ENCODE measurements at regions of chrX and their contacts with region 1.

Region 1: DNA sequence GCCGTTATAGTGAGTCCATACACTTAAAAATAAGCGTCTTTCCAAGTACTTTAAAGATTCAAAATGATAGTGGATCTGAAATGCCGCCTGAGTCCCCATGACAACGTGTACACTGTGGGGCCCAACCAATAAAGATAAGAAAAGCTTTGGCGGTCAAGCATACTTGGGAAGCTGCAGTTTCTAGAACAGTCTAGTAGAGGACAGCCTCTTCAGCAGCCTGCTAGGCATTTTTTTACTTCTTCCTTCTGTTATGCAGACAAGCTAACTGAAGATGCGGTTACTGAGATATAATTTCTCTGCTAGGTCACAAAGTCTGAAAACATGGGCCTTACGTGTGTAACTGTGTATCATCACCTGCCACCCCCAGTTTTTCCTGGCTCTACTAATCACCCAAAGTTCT is 402 bp upstream of the UPRT start:
- DNase-seq: no peak
- H3K4me3 ChIP-seq: peak overlapping the region; percentile 64 to 78
- H3K27ac ChIP-seq: peak overlapping the region; percentile 86 to 97
- H3K4me1 ChIP-seq: no peaks in the 10 kb centered on the region
- H3K27me3 ChIP-seq: no peaks in the 10 kb centered on the region
- CTCF ChIP-seq: no peak

Region 2: DNA sequence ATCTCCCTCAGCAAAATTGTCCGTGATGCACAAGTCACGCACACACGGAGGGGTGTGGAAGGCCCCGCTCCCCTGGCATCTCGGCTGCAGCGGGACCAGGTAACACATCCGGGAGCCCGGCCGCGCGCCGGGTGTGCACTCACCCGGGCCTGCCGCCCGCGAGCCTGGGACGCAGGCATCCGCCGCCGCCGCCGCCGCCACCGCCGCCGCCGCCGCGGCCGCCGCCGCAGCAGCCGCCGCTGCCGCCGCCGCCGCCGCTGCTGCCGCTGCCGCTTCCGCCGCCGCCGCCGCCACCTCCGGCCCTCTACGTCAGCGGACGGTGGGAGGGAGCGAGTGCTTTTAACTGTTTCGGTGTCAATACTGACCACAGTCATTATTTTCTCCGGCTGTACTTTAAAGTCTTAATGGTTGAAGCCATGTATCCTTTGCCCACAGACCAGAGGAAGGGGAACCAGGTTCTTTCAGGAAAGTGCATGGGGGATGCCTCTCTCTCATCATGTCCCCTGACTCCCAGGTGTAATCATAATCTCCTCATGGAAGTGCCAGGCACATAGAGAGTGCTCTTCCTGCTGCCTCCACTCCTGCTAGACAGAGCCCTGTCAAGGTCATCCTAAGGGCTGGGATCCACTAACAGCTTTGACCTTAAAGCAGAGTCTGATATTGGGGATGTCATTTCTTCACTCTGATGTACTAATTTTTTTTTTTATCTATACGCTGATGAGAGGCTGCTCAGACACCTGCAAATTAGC is 473.6 kb after region 1 on chrX:
- intact Hi-C with region 1: loop called (anchors 10 kb)
- DNase-seq: no peak
- H3K4me3 ChIP-seq: peak overlapping the region; percentile 53 to 61
- H3K27ac ChIP-seq: peak overlapping the region; percentile 57 to 66
- H3K4me1 ChIP-seq: no peaks in the 10 kb centered on the region
- H3K27me3 ChIP-seq: no peaks in the 10 kb centered on the region
- CTCF ChIP-seq: no peak